Sigmoid colon (tissue), 7 donors: ENCODE measurements at regions of chr1 and their contacts with region 1.

Region 1: DNA sequence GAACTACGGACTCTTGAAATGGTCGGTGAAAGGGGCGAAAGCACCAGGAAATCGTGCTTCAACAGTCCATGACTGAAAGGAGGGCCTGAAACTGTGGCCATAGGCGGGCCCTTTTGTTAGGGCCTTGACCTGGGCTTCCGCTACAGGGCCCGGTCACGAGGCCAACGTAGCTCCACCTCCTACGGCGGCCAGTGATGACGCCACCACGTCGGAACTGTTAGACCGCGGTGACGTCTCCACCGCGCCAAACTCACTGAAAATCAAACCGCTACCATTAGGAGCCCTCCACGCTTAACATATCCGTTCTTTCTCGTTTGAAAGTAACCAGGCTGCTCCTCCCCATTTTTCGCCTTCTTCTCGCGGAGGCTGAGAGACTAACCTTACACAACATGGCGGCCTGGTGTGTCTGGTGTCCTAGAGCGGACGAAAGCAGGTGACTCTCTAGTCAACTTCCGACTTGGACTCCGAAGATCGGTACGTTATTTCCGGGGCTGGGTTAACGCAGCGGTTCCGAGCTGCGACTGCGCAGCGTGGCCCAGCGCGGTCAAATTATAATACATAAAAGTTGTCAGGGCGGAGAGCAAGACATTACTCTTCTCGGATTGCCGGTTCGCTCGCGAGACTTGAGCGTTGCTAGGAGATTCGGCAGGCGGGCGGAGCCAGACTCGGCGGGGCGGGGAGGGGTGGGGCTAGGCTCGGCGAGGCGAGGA is 376 bp upstream of the CACYBP start:
- DNase-seq: peak; percentile 99
- H3K4me3 ChIP-seq: peak overlapping the region; percentile 72 to 96 (median 90)
- H3K27ac ChIP-seq: peak overlapping the region; percentile 93 to 99 (median 94)
- H3K4me1 ChIP-seq: peaks cover 0 to 44% (median 26%) of the 10 kb centered on the region in 4 donors
- H3K27me3 ChIP-seq: no peaks in the 10 kb centered on the region
- CTCF ChIP-seq: no peak
- EP300 ChIP-seq: peak in 3 of 4 donors; percentile 23 to 54 (median 51)
- POLR2A ChIP-seq: peak; percentile 95

Region 2: DNA sequence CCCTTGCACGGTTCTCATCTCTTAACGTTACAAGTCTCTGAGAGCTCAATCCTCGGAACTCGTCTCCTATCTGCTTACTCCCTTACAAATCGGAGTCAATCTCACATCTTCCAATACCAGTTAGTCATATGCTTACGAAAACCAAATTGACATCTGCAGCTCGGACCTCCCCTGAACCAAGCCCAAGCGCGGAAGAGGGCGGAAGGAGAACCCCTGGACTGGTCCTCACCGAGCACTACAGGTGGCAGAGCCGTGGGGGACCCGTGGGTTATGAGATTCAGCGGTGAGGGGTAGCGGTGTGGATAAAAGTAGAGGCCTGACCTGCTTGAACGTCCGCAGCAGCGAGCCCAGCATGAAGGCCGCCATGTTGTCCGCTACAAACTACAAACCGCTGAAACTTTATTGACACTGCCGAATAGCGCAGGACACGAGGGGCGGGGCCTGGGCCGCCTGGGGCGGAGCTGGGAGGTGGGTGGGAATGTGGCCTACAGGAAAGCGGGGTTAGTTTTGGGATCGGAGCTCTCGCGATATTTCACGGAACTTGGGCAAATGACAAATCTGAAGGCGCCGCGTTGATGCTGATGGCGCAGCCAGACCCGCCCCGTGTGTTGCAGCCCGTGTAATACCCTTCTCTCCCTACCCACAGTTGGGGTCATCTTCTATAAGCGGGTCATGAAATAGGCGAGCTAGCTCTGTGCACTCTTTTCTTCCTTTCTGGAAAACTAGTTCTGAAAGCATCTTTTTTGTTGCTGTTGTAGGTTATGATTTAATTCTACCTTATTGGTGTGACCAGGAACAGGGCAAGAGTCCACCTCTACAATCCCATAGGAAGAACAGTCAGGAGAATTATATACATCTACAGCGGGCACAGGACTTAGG is 23.9 kb after region 1 on chr1 and contains the start of gene MRPS14:
- intact Hi-C with region 1: loop called (anchors 2 kb)
- DNase-seq: peak; percentile 99
- H3K4me3 ChIP-seq: peak within 1 kb of the TSS; percentile 81 to 90 (median 87)
- H3K27ac ChIP-seq: peak within 1 kb of the TSS; percentile 81 to 86 (median 85)
- H3K4me1 ChIP-seq: peaks cover 0 to 14% (median 10%) of the 10 kb centered on the region in 4 donors
- H3K27me3 ChIP-seq: no peaks in the 10 kb centered on the region
- CTCF ChIP-seq: no peak
- EP300 ChIP-seq: no peak
- POLR2A ChIP-seq: peak; percentile 58 to 63
- total RNA-seq, gene MRPS14: 17.5 to 36.0 (median 24.3) TPM